A673 (cell line): ENCODE measurements at regions of chr5 and their contacts with region 1.

Region 1: DNA sequence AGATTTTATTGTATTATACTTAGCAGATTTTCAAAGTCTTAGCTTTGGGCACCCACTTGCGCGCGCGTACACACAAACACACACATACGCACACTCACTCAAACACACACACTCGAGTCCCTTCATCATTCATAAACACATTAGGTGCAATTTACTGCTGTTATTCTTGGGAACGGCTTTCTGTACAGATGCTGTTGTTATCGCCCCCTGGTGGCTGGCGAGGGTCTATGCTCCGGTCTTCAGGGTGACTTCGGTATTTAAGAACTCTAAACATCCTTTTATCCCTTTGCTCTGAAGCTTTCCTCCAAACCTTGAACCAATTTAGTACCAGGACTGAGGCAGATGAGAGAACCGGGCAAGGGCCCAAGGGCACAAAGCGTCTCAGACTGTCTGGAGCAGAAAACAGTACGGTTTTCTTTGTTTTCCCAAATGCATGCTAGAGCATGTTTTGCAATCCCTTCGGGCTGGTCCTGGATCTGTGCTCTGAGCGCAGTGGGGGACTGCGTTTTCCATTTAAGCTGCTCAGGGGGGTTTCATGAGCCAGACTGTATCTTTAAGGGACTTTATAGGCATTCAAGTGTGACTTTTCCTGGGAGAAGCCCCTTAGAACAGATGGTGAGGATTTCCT is 1.7 kb upstream of the SLIT3 start:
- DNase-seq: peak; percentile 70
- H3K4me3 ChIP-seq: no peak overlapping the region
- H3K27ac ChIP-seq: no peak overlapping the region
- H3K4me1 ChIP-seq: no peaks in the 10 kb centered on the region
- H3K27me3 ChIP-seq: peaks cover 82% of the 10 kb centered on the region
- CTCF ChIP-seq: peak; percentile 83

Region 2: DNA sequence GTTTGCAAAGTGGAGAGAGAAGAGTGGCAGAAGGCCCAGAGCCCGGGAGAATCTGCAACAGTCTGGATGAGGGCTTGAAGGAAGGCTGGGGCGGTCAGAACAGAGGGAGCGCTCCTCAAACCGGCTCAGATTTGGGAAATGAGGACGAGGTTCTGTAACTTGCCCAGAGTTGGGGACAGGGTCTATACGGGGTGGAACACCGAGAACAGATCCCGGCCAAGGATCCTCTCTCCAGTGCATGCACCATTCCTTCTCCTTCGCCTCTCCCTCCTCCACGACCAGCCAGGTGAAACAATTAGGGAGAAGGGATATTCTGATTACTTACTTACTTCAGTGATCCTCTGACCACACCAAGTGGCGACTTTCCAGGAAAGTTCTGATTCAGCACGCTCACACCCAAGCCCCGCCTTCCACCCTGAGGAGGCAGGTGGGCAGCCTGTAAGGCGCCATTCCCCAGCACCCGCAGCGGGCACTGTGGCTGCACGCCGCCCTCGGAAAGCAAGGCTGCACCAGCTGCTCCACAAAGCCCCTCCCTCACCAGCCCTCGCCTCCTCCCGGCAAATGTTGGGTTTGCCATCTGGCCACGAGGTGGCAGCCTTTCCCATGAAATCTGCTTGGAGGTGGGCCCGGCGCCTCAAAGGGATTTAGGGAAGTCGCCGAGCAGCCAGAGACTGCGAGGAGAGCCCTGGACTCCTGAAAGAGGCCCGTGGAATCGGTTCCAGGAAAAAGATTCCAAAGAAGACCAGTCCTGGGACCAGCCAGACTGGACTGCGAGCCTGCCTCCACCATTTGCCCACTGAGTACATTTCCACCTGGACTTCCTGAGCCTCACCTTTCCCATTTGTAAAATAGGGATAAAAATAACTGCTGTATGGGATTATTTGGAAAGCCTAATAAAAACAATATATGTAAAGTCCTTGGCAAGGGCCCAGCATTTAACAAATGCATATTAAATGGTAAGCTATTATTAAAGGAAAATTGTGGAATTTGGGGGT is 1033.4 kb before region 1 on chr5:
- CTCF ChIA-PET with region 1: no interaction called
- POLR2A ChIA-PET with region 1: no interaction called
- intact Hi-C with region 1: loop called (anchors 2 kb)
- DNase-seq: peak; percentile 92
- H3K4me3 ChIP-seq: peak overlapping the region; percentile 30
- H3K27ac ChIP-seq: no peak overlapping the region
- H3K4me1 ChIP-seq: peaks cover 5% of the 10 kb centered on the region
- H3K27me3 ChIP-seq: no peaks in the 10 kb centered on the region
- CTCF ChIP-seq: peak; percentile 85

Region 3: GRCh38 chr5:168679515-168679920 is 623.1 kb before region 1 on chr5:
- CTCF ChIA-PET with region 1: no interaction called
- POLR2A ChIA-PET with region 1: no interaction called
- intact Hi-C with region 1: loop called (anchors 2 kb)
- DNase-seq: peak; percentile 70
- H3K4me3 ChIP-seq: no peak overlapping the region
- H3K27ac ChIP-seq: no peak overlapping the region
- H3K4me1 ChIP-seq: no peaks in the 10 kb centered on the region
- H3K27me3 ChIP-seq: no peaks in the 10 kb centered on the region
- CTCF ChIP-seq: peak; percentile 83

Region 4: GRCh38 chr5:168706655-168707069 is 595.9 kb before region 1 on chr5:
- CTCF ChIA-PET with region 1: no interaction called
- POLR2A ChIA-PET with region 1: no interaction called
- intact Hi-C with region 1: loop called (anchors 10 kb)
- DNase-seq: peak; percentile 51
- H3K4me3 ChIP-seq: no peak overlapping the region
- H3K27ac ChIP-seq: no peak overlapping the region
- H3K4me1 ChIP-seq: no peaks in the 10 kb centered on the region
- H3K27me3 ChIP-seq: no peaks in the 10 kb centered on the region
- CTCF ChIP-seq: peak; percentile 57

Region 5: DNA sequence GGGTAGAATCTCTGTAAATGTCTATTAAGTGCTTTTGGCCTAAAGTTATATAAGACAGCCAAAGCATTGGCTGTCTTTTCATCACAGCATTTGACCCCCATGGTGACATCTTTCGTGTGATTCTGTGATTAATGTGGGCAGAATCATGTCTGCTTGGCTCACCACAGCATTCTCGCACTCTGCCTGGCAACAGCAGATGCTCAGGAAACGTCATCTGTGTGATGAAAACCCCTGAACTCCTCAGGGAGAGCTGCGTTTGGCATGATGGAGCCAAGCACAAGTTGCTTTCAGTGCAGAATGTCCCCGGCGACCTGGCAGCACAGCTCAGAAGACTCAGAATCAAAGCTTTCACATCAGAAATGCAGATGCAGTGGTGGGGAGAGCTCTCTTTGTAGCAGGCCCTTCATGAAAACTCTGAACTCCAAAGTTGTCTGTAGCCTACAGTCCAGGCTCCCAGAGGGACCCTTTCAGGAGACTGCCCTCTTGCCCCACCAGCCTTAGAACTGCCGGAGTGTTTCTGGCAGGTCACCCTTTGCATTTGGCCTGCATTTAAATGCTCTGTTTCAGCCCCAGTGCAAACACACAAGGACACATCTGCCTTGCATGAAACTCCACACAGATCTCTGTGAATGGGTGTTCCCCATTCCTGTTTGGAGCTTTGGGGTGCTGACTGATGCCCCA is 567.8 kb before region 1 on chr5:
- CTCF ChIA-PET with region 1: no interaction called
- POLR2A ChIA-PET with region 1: no interaction called
- intact Hi-C with region 1: no loop called
- DNase-seq: no peak
- H3K4me3 ChIP-seq: no peak overlapping the region
- H3K27ac ChIP-seq: no peak overlapping the region
- H3K4me1 ChIP-seq: no peaks in the 10 kb centered on the region
- H3K27me3 ChIP-seq: peaks cover 49% of the 10 kb centered on the region
- CTCF ChIP-seq: no peak

Region 6: GRCh38 chr5:168987543-168988300 is 314.9 kb before region 1 on chr5:
- CTCF ChIA-PET with region 1: no interaction called
- POLR2A ChIA-PET with region 1: no interaction called
- intact Hi-C with region 1: loop called (anchors 2 kb)
- DNase-seq: peak; percentile 61
- H3K4me3 ChIP-seq: no peak overlapping the region
- H3K27ac ChIP-seq: no peak overlapping the region
- H3K4me1 ChIP-seq: no peaks in the 10 kb centered on the region
- H3K27me3 ChIP-seq: peaks cover 47% of the 10 kb centered on the region
- CTCF ChIP-seq: peak; percentile 85

Region 7: GRCh38 chr5:169161022-169161680 is 141.5 kb before region 1 on chr5:
- CTCF ChIA-PET with region 1: no interaction called
- POLR2A ChIA-PET with region 1: no interaction called
- intact Hi-C with region 1: no loop called
- DNase-seq: no peak
- H3K4me3 ChIP-seq: no peak overlapping the region
- H3K27ac ChIP-seq: no peak overlapping the region
- H3K4me1 ChIP-seq: no peaks in the 10 kb centered on the region
- H3K27me3 ChIP-seq: no peaks in the 10 kb centered on the region
- CTCF ChIP-seq: no peak

Region 8: GRCh38 chr5:169583424-169584204 is 281.0 kb after region 1 on chr5 and contains the start of gene SPDL1:
- CTCF ChIA-PET with region 1: no interaction called
- POLR2A ChIA-PET with region 1: no interaction called
- intact Hi-C with region 1: loop called (anchors 5 kb)
- DNase-seq: peak; percentile 95
- H3K4me3 ChIP-seq: peak within 1 kb of the TSS; percentile 88
- H3K27ac ChIP-seq: peak within 1 kb of the TSS; percentile 91
- H3K4me1 ChIP-seq: peaks cover 6% of the 10 kb centered on the region
- H3K27me3 ChIP-seq: peaks cover 9% of the 10 kb centered on the region
- CTCF ChIP-seq: no peak
- total RNA-seq, gene SPDL1: 50.2 and 57.6 TPM in 2 replicates